Caco-2 (cell line): ENCODE measurements at regions of chr17 and their contacts with region 1.

Region 1: GRCh38 chr17:15260376-15261257 is 4.5 kb downstream of the PMP22 start:
- DNase-seq: peak; percentile 42 to 79
- H3K4me3 ChIP-seq: peak overlapping the region; percentile 68
- H3K4me3 Mint-ChIP-seq: peak overlapping the region; percentile 85
- H3K27ac Mint-ChIP-seq: no peak overlapping the region
- H3K4me1 ChIP-seq: no peaks in the 10 kb centered on the region
- H3K4me1 Mint-ChIP-seq: no peaks in the 10 kb centered on the region
- H3K27me3 ChIP-seq: no peaks in the 10 kb centered on the region; the same call in 1 of the 2 replicates
- H3K27me3 Mint-ChIP-seq: no peaks in the 10 kb centered on the region
- CTCF ChIP-seq: peak; percentile 22 to 54

Region 2: DNA sequence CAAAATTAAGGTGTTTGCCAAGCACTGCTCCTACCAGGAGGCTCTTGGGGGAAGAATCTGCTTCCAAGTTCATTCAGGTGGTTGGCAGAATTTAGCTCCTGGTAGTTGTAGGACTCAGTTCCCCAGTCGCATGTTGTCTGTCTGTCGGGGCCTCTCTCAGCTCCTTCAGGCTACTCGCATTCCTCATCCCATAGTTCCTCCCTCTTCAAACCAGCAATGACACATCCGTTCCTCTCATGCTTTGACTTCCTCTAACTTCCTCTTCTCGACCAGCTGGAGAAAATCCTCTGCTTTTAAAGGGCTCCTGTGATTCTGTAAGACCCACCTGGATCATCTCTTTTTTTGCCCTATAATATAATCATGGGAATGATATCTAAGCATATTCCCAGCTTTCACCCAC is 103.6 kb before region 1 on chr17:
- CTCF ChIA-PET with region 1: no interaction called
- POLR2A ChIA-PET with region 1: no interaction called
- intact Hi-C with region 1: no loop called
- DNase-seq: no peak
- H3K4me3 ChIP-seq: no peak overlapping the region
- H3K4me3 Mint-ChIP-seq: no peak overlapping the region
- H3K27ac Mint-ChIP-seq: no peak overlapping the region
- H3K4me1 ChIP-seq: no peaks in the 10 kb centered on the region
- H3K4me1 Mint-ChIP-seq: no peaks in the 10 kb centered on the region
- H3K27me3 ChIP-seq: no peaks in the 10 kb centered on the region; the same call in 1 of the 2 replicates
- H3K27me3 Mint-ChIP-seq: peaks cover 11% of the 10 kb centered on the region
- CTCF ChIP-seq: no peak

Region 3: DNA sequence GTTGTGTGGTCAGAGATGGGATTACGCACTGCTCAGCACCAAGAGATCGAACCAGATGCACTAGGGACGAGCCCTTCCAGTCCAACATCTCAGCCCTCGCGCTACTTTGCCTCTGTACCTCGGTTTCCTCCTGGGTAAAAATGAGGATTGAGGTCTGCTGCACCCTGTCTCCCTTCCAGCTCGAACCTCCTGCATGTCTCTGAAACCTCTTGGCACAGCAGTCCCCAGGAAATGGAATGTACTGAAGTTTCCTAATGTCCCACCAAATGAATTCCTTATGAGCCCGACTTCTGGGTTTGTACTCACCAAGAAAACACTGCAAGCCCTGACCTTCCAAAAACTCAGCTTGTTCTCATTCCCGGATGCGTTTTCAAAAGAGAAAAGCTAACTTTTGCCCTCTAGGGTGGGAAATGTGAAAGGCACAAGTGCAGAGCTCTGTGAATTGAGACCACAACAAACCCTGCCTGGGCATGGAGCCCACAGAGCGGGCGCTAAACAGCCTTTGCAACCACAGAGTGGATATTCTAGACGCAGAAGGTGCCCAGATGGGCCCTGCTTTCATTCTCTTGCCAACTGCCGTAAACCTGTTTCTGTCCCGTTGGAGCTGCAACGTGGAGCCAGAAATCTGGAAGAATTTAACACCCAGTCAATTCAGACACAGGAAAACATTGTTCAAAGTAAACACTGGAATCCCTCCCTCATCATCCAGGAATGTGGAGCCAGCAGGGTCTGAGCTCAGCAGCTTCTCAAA is 196.5 kb after region 1 on chr17:
- CTCF ChIA-PET with region 1: interaction called, 4 read pairs
- POLR2A ChIA-PET with region 1: no interaction called
- intact Hi-C with region 1: loop called (anchors 2 kb)
- DNase-seq: no peak
- H3K4me3 ChIP-seq: no peak overlapping the region
- H3K4me3 Mint-ChIP-seq: no peak overlapping the region
- H3K27ac Mint-ChIP-seq: peak overlapping the region; percentile 69
- H3K4me1 ChIP-seq: peaks cover 14% of the 10 kb centered on the region; the same call in 1 of the 2 replicates
- H3K4me1 Mint-ChIP-seq: peaks cover 10% of the 10 kb centered on the region
- H3K27me3 ChIP-seq: no peaks in the 10 kb centered on the region
- H3K27me3 Mint-ChIP-seq: no peaks in the 10 kb centered on the region
- CTCF ChIP-seq: no peak

Region 4: DNA sequence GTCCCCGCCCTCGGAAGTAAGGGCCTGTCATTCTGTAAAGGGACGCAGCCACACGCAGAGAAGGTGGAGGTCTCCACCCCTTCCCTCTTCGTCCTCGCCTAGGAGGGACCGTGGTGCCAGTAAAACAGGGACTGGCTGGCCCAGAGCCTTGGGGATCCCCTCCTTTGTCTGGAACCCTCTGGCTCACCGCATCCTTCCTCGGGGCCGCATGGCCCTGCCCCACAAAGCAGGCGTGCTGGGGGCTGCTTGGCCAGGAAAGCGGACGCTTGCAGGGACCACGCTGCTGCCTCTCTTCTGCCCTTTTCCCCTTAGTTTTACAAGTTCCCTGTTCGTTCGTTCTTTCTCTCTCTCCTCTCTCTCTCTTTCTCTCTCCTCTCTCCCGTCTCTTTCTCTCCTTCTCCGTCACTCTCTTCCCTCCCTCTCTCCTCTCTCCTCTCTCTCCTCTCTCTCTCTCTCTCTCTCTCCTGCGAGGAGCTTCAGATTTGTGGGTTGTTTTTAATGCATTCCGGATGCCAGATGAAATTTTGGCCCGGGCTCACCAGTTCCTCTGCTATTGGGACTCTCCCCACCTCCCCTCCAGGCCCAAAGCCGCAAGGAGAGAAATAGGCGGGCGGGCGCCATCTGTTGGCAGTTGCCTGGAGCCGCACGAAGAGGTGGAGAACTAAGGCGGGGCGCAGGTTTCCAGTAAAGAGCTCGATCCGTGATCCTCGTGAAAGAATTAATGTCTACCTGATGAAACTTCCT is 241.9 kb after region 1 on chr17:
- CTCF ChIA-PET with region 1: interaction called, 8 read pairs
- POLR2A ChIA-PET with region 1: no interaction called
- intact Hi-C with region 1: loop called (anchors 1 kb)
- DNase-seq: peak; percentile 53 to 64
- H3K4me3 ChIP-seq: no peak overlapping the region
- H3K4me3 Mint-ChIP-seq: no peak overlapping the region
- H3K27ac Mint-ChIP-seq: peak overlapping the region; percentile 65
- H3K4me1 ChIP-seq: no peaks in the 10 kb centered on the region
- H3K4me1 Mint-ChIP-seq: peaks cover 8% of the 10 kb centered on the region
- H3K27me3 ChIP-seq: no peaks in the 10 kb centered on the region
- H3K27me3 Mint-ChIP-seq: no peaks in the 10 kb centered on the region
- CTCF ChIP-seq: peak; percentile 38 to 75